HCT116 (cell line): ENCODE measurements at regions of chr2 and their contacts with region 1.

Region 1: DNA sequence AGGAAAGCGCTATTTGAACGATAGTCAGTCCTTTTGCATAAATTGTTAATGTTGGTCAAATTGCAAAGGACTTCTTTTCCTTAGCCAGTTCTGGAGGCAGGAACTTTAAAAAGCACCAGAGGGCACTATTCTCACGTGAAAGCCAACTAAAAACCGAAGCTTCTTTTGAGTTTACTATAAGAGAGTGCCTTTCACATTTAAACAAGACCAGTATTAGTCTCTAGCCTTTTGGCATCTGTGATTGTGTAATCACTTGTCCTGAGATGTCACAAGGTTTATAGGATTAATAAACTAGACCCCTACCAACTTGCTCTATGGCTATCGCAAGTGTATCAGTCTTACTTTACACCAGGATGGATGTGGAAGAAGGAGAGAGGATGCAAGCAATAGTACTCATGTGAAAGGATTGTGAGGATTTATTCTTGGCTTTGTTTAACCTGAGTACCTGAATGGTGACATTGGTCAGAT is 14.4 kb upstream of the STAT4 start:
- DNase-seq: peak; percentile 36
- ATAC-seq: peak; percentile 94
- H3K4me3 ChIP-seq: no peak overlapping the region
- H3K27ac ChIP-seq: no peak overlapping the region
- H3K4me1 ChIP-seq: peaks cover 2 to 12% of the 10 kb centered on the region in 2 experiments; a peak in 1 of 4 replicates
- H3K27me3 ChIP-seq: no peaks in the 10 kb centered on the region
- CTCF ChIP-seq: peak; percentile 50 to 87 (median 86)
- POLR2A ChIP-seq: no peak
- RAD21 ChIP-seq: peak; percentile 89

Region 2: GRCh38 chr2:190648289-190649034 is 516.7 kb before region 1 on chr2:
- CTCF ChIA-PET with region 1: no interaction called
- POLR2A ChIA-PET with region 1: no interaction called
- RAD21 ChIA-PET with region 1: no interaction called
- intact Hi-C with region 1: no loop called
- DNase-seq: peak; percentile 59
- ATAC-seq: peak; percentile 79
- H3K4me3 ChIP-seq: peak overlapping the region; percentile 43 to 66
- H3K27ac ChIP-seq: peak overlapping the region; percentile 49
- H3K4me1 ChIP-seq: peaks cover 4 to 27% of the 10 kb centered on the region in 2 experiments; a peak in 3 of 4 replicates
- H3K27me3 ChIP-seq: no peaks in the 10 kb centered on the region
- CTCF ChIP-seq: no peak
- POLR2A ChIP-seq: no peak
- RAD21 ChIP-seq: no peak

Region 3: GRCh38 chr2:190679813-190680591 is 485.2 kb before region 1 on chr2:
- CTCF ChIA-PET with region 1: no interaction called
- POLR2A ChIA-PET with region 1: no interaction called
- RAD21 ChIA-PET with region 1: no interaction called
- intact Hi-C with region 1: no loop called
- DNase-seq: peak; percentile 16
- ATAC-seq: peak; percentile 96
- H3K4me3 ChIP-seq: no peak overlapping the region
- H3K27ac ChIP-seq: no peak overlapping the region
- H3K4me1 ChIP-seq: peaks cover 0 to 20% of the 10 kb centered on the region in 2 experiments; a peak in 2 of 4 replicates
- H3K27me3 ChIP-seq: no peaks in the 10 kb centered on the region
- CTCF ChIP-seq: peak; percentile 44 to 75 (median 72); a peak in 5 of 6 replicates
- POLR2A ChIP-seq: no peak
- RAD21 ChIP-seq: peak; percentile 65

Region 4: GRCh38 chr2:191150600-191151330 is 14.4 kb before region 1 on chr2 and contains the start of gene STAT4:
- CTCF ChIA-PET with region 1: interaction called, 18 read pairs
- POLR2A ChIA-PET with region 1: no interaction called
- RAD21 ChIA-PET with region 1: no interaction called
- intact Hi-C with region 1: no loop called
- DNase-seq: peak; percentile 57
- ATAC-seq: peak; percentile 89
- H3K4me3 ChIP-seq: peak within 1 kb of the TSS; percentile 63 to 70
- H3K27ac ChIP-seq: peak within 1 kb of the TSS; percentile 1
- H3K4me1 ChIP-seq: peaks cover 0 to 9% of the 10 kb centered on the region in 2 experiments; a peak in 2 of 4 replicates
- H3K27me3 ChIP-seq: no peaks in the 10 kb centered on the region
- CTCF ChIP-seq: no peak
- POLR2A ChIP-seq: no peak
- RAD21 ChIP-seq: no peak
- total RNA-seq, gene STAT4: 2.0 TPM

Region 5: GRCh38 chr2:191218292-191218898 is 53.2 kb after region 1 on chr2:
- CTCF ChIA-PET with region 1: interaction called, 17 read pairs
- POLR2A ChIA-PET with region 1: no interaction called
- RAD21 ChIA-PET with region 1: no interaction called
- intact Hi-C with region 1: loop called (anchors 5 kb)
- DNase-seq: peak; percentile 67
- ATAC-seq: peak; percentile 92
- H3K4me3 ChIP-seq: no peak overlapping the region
- H3K27ac ChIP-seq: no peak overlapping the region
- H3K4me1 ChIP-seq: peaks cover 10 to 27% of the 10 kb centered on the region in 2 experiments; a peak in 3 of 4 replicates
- H3K27me3 ChIP-seq: no peaks in the 10 kb centered on the region
- CTCF ChIP-seq: peak; percentile 73 to 90 (median 76)
- POLR2A ChIP-seq: no peak
- RAD21 ChIP-seq: peak; percentile 83

Region 6: DNA sequence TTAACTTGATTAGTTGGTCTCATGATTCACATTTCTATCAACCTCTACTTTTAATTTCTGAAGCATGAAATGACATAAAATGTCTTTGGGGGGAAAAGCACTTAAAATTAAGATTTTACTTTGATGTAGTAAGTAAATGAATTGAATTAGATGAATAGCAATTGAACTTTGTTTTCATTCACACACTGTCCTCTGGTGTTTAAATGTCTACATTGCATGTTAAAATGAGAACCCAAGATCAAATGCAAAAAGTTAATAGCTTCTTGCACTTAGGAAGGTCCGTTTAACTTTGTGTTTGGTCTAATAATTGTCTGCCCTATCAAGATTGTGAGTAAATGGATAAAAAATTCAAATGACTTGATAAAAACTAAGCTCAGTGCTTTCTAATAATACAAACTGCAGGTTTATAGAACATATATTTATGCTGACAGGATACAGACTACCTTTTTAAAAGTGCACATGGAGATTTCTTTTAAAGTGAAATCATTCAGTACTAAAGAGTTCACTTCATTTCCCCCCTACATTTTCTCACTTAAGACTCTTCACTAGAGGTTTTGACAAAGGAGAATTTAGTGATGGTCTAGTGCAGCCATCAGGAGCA is 356.5 kb after region 1 on chr2:
- CTCF ChIA-PET with region 1: interaction called, 28 read pairs
- POLR2A ChIA-PET with region 1: interaction called, 3 read pairs
- RAD21 ChIA-PET with region 1: interaction called, 6 read pairs
- intact Hi-C with region 1: loop called (anchors 1 kb)
- DNase-seq: peak; percentile 26
- ATAC-seq: no peak
- H3K4me3 ChIP-seq: no peak overlapping the region
- H3K27ac ChIP-seq: no peak overlapping the region
- H3K4me1 ChIP-seq: no peaks in the 10 kb centered on the region
- H3K27me3 ChIP-seq: no peaks in the 10 kb centered on the region
- CTCF ChIP-seq: peak; percentile 64 to 84 (median 79)
- POLR2A ChIP-seq: no peak
- RAD21 ChIP-seq: peak; percentile 87

Region 7: DNA sequence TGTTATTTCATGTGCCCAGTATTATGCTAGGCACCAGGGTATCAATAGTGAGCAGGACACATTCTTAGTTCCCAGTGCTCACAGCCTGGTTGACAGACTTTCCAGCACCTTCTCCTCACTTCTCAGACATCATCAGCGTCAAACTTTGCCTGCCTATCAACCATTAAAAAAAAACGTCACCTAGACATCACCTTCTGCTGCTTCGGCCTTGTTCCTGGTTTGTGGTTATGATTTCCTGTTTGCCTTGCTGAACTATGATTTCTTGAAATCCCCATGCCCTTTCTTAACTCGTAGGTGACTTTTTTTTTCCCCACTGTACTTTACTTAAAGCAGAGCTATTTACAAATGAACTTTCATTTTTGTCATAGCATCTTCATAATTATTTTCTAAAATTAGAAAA is 452.4 kb after region 1 on chr2:
- CTCF ChIA-PET with region 1: no interaction called
- POLR2A ChIA-PET with region 1: no interaction called
- RAD21 ChIA-PET with region 1: no interaction called
- intact Hi-C with region 1: no loop called
- DNase-seq: no peak
- ATAC-seq: no peak
- H3K4me3 ChIP-seq: no peak overlapping the region
- H3K27ac ChIP-seq: no peak overlapping the region
- H3K4me1 ChIP-seq: no peaks in the 10 kb centered on the region
- H3K27me3 ChIP-seq: no peaks in the 10 kb centered on the region
- CTCF ChIP-seq: no peak
- POLR2A ChIP-seq: no peak
- RAD21 ChIP-seq: no peak

Region 8: GRCh38 chr2:191811807-191812602 is 646.8 kb after region 1 on chr2:
- CTCF ChIA-PET with region 1: no interaction called
- POLR2A ChIA-PET with region 1: no interaction called
- RAD21 ChIA-PET with region 1: no interaction called
- intact Hi-C with region 1: no loop called
- DNase-seq: peak; percentile 53
- ATAC-seq: peak; percentile 94
- H3K4me3 ChIP-seq: no peak overlapping the region
- H3K27ac ChIP-seq: no peak overlapping the region
- H3K4me1 ChIP-seq: no peaks in the 10 kb centered on the region
- H3K27me3 ChIP-seq: no peaks in the 10 kb centered on the region
- CTCF ChIP-seq: peak; percentile 73 to 89 (median 87)
- POLR2A ChIP-seq: no peak
- RAD21 ChIP-seq: peak; percentile 97